Dendritic cell treated with granulocyte-macrophage colony-stimulating factor and Interleukin-4, amounts not matched to agents 40 ng/mL and 50 ng/mL, for 4 days (primary cell): ENCODE measurements at regions of chr12 and their contacts with region 1.

Region 1: DNA sequence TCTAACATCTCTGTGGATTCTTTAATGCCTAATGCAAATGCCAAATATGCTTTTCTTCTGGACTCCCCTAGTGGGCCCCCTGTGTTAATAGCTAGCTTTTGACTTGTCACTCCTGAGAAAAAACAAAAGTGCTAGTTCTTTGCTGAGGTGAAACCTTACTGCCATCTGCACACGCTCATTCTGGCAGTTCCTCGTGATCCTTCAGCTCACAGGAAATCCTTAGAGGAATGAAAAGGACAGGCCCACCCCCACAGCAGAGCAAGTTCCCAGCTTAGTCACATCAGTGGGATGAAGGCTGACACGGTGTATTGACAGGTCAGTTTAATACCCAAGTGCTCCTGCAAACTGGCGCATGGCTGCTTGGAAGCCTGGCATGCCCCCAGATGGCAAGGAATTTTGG is 165.1 kb upstream of the ATP2B1 start:
- H3K4me3 Mint-ChIP-seq: no peak overlapping the region
- H3K27ac Mint-ChIP-seq: peak overlapping the region; percentile 62
- H3K4me1 Mint-ChIP-seq: peaks cover 14% of the 10 kb centered on the region
- H3K27me3 Mint-ChIP-seq: no peaks in the 10 kb centered on the region

Region 2: DNA sequence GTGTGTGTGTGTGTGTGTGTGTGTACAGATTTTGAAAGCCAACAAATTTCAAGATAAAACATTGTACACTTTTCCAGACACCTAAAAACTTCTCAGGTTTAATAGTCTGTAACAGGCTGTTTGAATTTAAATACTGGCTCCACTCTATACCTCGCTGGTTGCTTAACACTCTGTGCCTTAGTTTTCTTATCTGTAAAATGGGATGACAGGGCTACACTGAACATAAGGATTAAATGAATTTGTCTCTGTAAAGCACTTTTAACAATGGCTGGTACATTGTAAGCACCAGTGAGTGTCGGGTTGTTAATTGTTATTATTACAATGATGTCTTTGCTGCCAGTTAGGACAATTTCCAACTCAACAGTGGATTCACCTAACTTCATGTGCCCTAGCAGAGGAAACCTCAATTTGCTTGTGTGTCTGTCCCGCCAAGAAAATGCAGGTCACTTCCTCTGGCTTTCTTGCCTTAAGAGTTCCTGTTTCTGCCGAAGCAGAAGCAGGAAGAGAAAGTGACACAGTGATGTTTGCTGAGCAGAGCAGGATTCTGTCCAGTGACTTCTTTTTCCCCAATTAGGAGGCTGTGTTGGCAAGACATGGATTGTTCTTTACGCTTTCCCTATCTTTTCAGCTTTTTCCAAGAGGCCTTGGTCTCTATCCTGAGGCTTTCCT is 11.1 kb before region 1 on chr12:
- intact Hi-C with region 1: no loop called
- H3K4me3 Mint-ChIP-seq: no peak overlapping the region
- H3K27ac Mint-ChIP-seq: peak overlapping the region; percentile 97
- H3K4me1 Mint-ChIP-seq: peaks cover 72% of the 10 kb centered on the region
- H3K27me3 Mint-ChIP-seq: no peaks in the 10 kb centered on the region

Region 3: GRCh38 chr12:89918181-89918868 is 44.6 kb after region 1 on chr12:
- intact Hi-C with region 1: loop called (anchors 5 kb)
- H3K4me3 Mint-ChIP-seq: no peak overlapping the region
- H3K27ac Mint-ChIP-seq: peak overlapping the region; percentile 73
- H3K4me1 Mint-ChIP-seq: peaks cover 7% of the 10 kb centered on the region
- H3K27me3 Mint-ChIP-seq: no peaks in the 10 kb centered on the region